Activated CD4-positive, alpha-beta memory T cell treated with anti-CD3 and anti-CD28 coated beads, Interleukin-2, amount 10 ng/mL, durations not matched to agents 7 days and 5 days (primary cell): ENCODE measurements at regions of chr2 and their contacts with region 1.

Region 1: GRCh38 chr2:74391580-74392448 is 11.7 kb upstream of the DCTN1 start:
- DNase-seq: peak; percentile 95
- H3K4me3 Mint-ChIP-seq: peak overlapping the region; percentile 94
- H3K27ac Mint-ChIP-seq: peak overlapping the region; percentile 96
- H3K4me1 Mint-ChIP-seq: peaks cover 12% of the 10 kb centered on the region
- H3K27me3 Mint-ChIP-seq: peaks cover 6% of the 10 kb centered on the region

Region 2: GRCh38 chr2:74238879-74239278 is 152.9 kb before region 1 on chr2:
- CTCF ChIA-PET with region 1: no interaction called
- POLR2A ChIA-PET with region 1: no interaction called
- DNase-seq: no peak
- H3K4me3 Mint-ChIP-seq: no peak overlapping the region
- H3K27ac Mint-ChIP-seq: no peak overlapping the region
- H3K4me1 Mint-ChIP-seq: no peaks in the 10 kb centered on the region
- H3K27me3 Mint-ChIP-seq: no peaks in the 10 kb centered on the region

Region 3: GRCh38 chr2:74421221-74421870 is 29.5 kb after region 1 on chr2 and contains the starts of genes C2orf81 and WDR54:
- CTCF ChIA-PET with region 1: interaction called, 10 read pairs
- POLR2A ChIA-PET with region 1: interaction called, 5 read pairs
- DNase-seq: peak; percentile 96
- H3K4me3 Mint-ChIP-seq: peak within 1 kb of the TSS; percentile 94
- H3K27ac Mint-ChIP-seq: peak within 1 kb of the TSS; percentile 95
- H3K4me1 Mint-ChIP-seq: peaks cover 29% of the 10 kb centered on the region
- H3K27me3 Mint-ChIP-seq: peaks cover 10% of the 10 kb centered on the region
- total RNA-seq, gene C2orf81: 1.2 to 1.6 TPM
- total RNA-seq, gene WDR54: 102 to 105 TPM

Region 4: GRCh38 chr2:74440378-74441169 is 48.8 kb after region 1 on chr2:
- CTCF ChIA-PET with region 1: no interaction called
- POLR2A ChIA-PET with region 1: no interaction called
- DNase-seq: peak; percentile 42
- H3K4me3 Mint-ChIP-seq: peak overlapping the region; percentile 19
- H3K27ac Mint-ChIP-seq: no peak overlapping the region
- H3K4me1 Mint-ChIP-seq: peaks cover 11% of the 10 kb centered on the region
- H3K27me3 Mint-ChIP-seq: peaks cover 51% of the 10 kb centered on the region